ENCODE measurements at regions of chr20 and their contacts with region 1.

Region 1: DNA sequence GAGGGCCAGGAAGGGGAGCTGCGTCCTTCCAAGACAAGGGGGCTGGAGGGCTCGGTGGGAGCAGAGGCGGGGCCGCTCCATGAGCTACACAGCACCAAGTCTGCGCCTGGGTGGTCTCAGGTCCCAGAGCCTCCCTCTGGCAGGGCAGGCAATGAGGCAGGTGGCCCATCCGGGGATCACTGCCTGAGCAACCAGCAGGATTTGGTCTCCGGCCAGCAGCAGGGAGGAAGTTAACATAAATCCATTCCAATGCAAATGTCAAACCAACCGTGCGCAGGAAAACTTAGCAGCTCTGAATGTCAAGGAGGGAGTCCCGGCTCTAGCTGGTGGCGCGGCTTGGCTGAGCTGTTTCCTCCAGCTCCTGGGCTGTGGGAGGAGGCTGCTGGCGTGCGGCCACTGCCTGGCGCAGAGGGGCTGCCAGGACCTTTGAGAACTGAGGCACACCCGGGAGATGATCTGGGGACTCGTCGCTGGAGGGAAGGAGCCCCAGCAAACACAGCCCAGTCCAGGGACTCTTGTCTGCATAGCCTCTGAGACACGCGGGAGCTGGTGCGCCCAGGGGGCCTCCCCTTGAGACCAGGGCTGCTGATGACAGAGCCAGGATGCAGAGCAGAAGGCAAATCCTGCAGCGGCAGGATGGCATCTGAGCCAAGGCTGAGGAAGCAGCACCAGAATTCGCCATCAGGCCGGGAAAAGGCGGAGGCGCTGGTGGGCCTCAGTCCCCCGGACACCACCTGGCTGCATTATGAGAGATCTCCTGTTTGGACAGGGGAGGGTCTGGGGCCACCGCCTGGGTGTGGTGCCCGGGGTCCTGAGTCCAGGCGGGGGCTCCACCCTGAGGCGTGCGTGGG is 33.1 kb upstream of the CHRNA4 start:
- DNase-seq: no peak
- H3K4me3 ChIP-seq: no peak overlapping the region
- CTCF ChIP-seq: no peak

Region 2: DNA sequence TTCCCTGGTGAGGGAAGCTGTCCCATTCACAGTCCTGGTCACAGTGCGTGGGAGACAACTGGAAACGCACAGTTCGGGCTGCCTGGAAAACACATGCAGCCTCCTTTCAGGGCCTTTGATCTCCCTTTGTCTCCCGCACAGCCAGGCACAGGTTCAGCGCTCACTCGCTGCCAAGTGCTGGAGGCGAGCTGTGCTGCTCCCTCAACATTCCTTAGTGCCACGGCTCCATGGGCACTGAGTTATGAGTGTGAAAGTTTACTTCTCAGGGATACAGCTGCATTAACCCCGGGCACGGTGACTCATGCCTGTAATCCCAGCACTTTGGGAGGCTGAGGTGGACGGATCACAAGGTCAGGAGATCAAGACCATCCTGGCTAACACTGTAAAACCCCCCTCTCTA is 187.4 kb before region 1 on chr20:
- in situ Hi-C with region 1: loop called (anchors 10 kb)
- DNase-seq: peak; percentile 12
- H3K4me3 ChIP-seq: no peak overlapping the region
- CTCF ChIP-seq: no peak

Region 3: GRCh38 chr20:63290677-63291472 is 103.4 kb before region 1 on chr20:
- in situ Hi-C with region 1: loop called (anchors 5 kb)
- DNase-seq: no peak
- H3K4me3 ChIP-seq: no peak overlapping the region
- CTCF ChIP-seq: peak; percentile 65

Region 4: DNA sequence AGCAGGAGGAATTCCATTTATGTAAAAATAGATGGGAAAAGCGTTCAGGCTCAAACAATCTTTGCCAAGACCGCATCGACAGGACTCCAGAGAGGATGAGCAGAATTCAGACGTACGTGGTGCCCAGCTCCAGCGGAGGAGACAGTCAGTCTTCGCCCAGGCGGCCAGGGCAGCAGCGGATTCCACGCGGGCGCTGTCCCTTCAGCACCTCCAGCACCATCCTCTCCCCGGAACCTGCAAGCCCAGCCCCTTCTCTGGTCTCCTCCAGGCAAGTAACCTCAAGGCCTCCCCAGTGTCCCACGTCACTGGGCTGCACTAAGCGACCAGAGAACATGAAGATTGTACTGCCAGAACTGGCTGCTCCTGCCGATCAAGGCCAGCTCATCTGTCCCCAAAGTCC is 80.9 kb after region 1 on chr20:
- in situ Hi-C with region 1: loop called (anchors 10 kb)
- DNase-seq: no peak
- H3K4me3 ChIP-seq: no peak overlapping the region
- CTCF ChIP-seq: no peak

Measured in astrocyte of the cerebellum (primary cell).